ENCODE measurements at regions of chr16 and their contacts with region 1.

Region 1: DNA sequence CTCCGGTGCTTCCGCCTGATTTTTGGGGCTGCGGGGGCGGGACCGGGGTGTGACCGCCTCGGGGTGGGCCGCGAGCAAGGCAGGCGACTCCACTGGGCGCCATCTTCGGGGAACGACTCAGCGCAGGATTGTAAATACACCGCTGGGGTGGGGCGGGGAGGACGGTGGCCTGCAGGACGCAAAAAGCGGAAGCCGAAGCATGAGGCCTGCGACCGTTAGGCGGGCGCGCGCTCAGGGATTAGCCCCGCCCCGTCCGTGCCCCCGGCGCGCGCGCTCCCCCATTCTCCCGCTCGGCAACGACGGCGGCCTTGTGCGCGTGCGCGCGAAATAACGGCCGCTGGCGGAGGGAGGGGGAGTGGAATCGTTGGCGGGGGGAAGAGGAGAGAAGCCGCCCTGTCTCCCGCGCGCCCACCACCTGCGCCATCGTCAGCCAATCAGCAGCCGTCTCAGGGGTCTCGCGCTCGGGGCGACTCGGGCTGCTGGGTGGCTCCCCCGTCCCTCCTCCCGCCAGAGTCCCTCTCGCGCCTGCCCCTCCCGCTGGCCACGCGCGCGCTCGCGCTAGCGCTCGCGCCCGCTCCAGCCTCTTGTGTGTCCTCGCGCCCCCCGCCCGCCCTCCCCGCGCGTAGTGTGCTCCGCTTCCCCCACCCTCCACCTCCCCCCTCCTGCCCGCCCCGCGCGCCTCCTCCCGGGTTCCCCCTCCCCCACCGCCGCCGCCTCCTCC is 791 bp upstream of the MAZ start:
- DNase-seq: peak; percentile 96 to 98 (median 97)
- H3K4me3 ChIP-seq: peak overlapping the region; percentile 55 to 88 (median 79)
- H3K4me3 Mint-ChIP-seq: peak overlapping the region; percentile 99
- H3K27ac ChIP-seq: peak overlapping the region; percentile 69 to 86
- H3K27ac Mint-ChIP-seq: peak overlapping the region; percentile 95 to 99 (median 97)
- H3K4me1 ChIP-seq: peaks cover 45 to 53% of the 10 kb centered on the region in 2 donors
- H3K4me1 Mint-ChIP-seq: peaks cover 39% of the 10 kb centered on the region
- H3K27me3 ChIP-seq: no peaks in the 10 kb centered on the region
- H3K27me3 Mint-ChIP-seq: peaks cover 0 to 4% (median 2%) of the 10 kb centered on the region in 3 donors
- CTCF ChIP-seq: no peak

Region 2: GRCh38 chr16:29653471-29653870 is 152.1 kb before region 1 on chr16:
- intact Hi-C with region 1: no loop called
- DNase-seq: peak; percentile 79 to 94 (median 89)
- H3K4me3 ChIP-seq: no peak overlapping the region
- H3K4me3 Mint-ChIP-seq: peak overlapping the region in 1 of 2 donors; percentile 73
- H3K27ac ChIP-seq: peak overlapping the region; percentile 39 to 73
- H3K27ac Mint-ChIP-seq: peak overlapping the region; percentile 76 to 92 (median 88)
- H3K4me1 ChIP-seq: peaks cover 44 to 50% of the 10 kb centered on the region in 2 donors
- H3K4me1 Mint-ChIP-seq: peaks cover 42% of the 10 kb centered on the region
- H3K27me3 ChIP-seq: no peaks in the 10 kb centered on the region
- H3K27me3 Mint-ChIP-seq: peaks cover 0 to 3% (median 1%) of the 10 kb centered on the region in 3 donors
- CTCF ChIP-seq: no peak

Region 3: GRCh38 chr16:29790183-29790952 is 15.2 kb before region 1 on chr16 and contains the start of gene KIF22:
- intact Hi-C with region 1: loop called in 1 of 2 experiments (anchors 2 kb)
- DNase-seq: peak; percentile 99 to 100 (median 99)
- H3K4me3 ChIP-seq: peak within 1 kb of the TSS; percentile 67 to 97 (median 97)
- H3K4me3 Mint-ChIP-seq: peak within 1 kb of the TSS; percentile 97 to 98
- H3K27ac ChIP-seq: peak within 1 kb of the TSS; percentile 78 to 83
- H3K27ac Mint-ChIP-seq: peak within 1 kb of the TSS; percentile 89 to 95 (median 94)
- H3K4me1 ChIP-seq: peaks cover 26 to 36% of the 10 kb centered on the region in 2 donors
- H3K4me1 Mint-ChIP-seq: peaks cover 43% of the 10 kb centered on the region
- H3K27me3 ChIP-seq: no peaks in the 10 kb centered on the region
- H3K27me3 Mint-ChIP-seq: peaks cover 0 to 1% (median 0%) of the 10 kb centered on the region in 3 donors
- CTCF ChIP-seq: peak; percentile 77
- polyA plus RNA-seq, gene KIF22: 22.0 to 46.2 (median 28.9) TPM

Region 4: GRCh38 chr16:29848420-29849297 is 43.1 kb after region 1 on chr16:
- intact Hi-C with region 1: loop called in 1 of 2 experiments (anchors 5 kb)
- DNase-seq: peak; percentile 64 to 70 (median 64)
- H3K4me3 ChIP-seq: no peak overlapping the region
- H3K4me3 Mint-ChIP-seq: no peak overlapping the region
- H3K27ac ChIP-seq: no peak overlapping the region
- H3K27ac Mint-ChIP-seq: no peak overlapping the region
- H3K4me1 ChIP-seq: no peaks in the 10 kb centered on the region
- H3K4me1 Mint-ChIP-seq: no peaks in the 10 kb centered on the region
- H3K27me3 ChIP-seq: no peaks in the 10 kb centered on the region
- H3K27me3 Mint-ChIP-seq: peaks cover 0 to 2% (median 1%) of the 10 kb centered on the region in 3 donors
- CTCF ChIP-seq: peak; percentile 92

Measured in CD14-positive monocyte (primary cell).